Right lobe of liver (tissue), 6 donors: ENCODE measurements at regions of chr1 and their contacts with region 1.

Region 1: GRCh38 chr1:109910123-109910962 is at the start of gene CSF1:
- DNase-seq: peak; percentile 82 to 86 (median 82)
- ATAC-seq: peak; percentile 77 to 82 (median 79)
- H3K4me3 ChIP-seq: peak within 1 kb of the TSS; percentile 77 to 89 (median 87)
- H3K27ac ChIP-seq: peak within 1 kb of the TSS; percentile 76 to 83 (median 76)
- H3K4me1 ChIP-seq: peaks cover 0 to 34% (median 10%) of the 10 kb centered on the region in 4 donors
- H3K27me3 ChIP-seq: no peaks in the 10 kb centered on the region
- CTCF ChIP-seq: no peak
- POLR2A ChIP-seq: peak; percentile 82
- total RNA-seq, gene CSF1: 4.8 to 44.1 (median 22.0) TPM

Region 2: GRCh38 chr1:109979489-109980091 is 69.2 kb after region 1 on chr1:
- intact Hi-C with region 1: loop called in 1 of 2 experiments (anchors 10 kb)
- DNase-seq: no peak
- ATAC-seq: peak in 2 of 4 donors; percentile 5 to 19
- H3K4me3 ChIP-seq: no peak overlapping the region
- H3K27ac ChIP-seq: no peak overlapping the region
- H3K4me1 ChIP-seq: peaks cover 0 to 38% (median 13%) of the 10 kb centered on the region in 4 donors
- H3K27me3 ChIP-seq: no peaks in the 10 kb centered on the region
- CTCF ChIP-seq: no peak
- POLR2A ChIP-seq: no peak